ENCODE measurements at regions of chr20 and their contacts with region 1.

Region 1: DNA sequence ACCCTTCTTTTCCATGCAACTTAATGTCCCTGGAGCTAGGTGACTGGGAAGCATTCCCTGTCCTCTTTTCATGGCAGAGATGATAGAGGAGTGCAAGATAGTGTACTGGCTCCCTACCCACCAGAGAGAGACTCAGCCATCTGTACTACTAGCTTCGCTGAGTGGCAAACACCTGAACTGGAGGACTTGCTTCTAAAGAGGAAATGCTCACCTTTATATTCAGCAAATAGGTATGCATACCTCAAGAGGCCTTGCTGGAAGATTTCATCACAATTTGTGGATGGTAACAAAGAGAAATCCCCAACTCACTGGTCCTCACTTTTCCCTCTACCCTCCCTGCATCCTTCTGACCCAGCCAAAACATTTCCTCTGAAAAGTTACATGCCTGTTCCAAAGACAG is 124.1 kb downstream of the FOXA2 start:
- DNase-seq: no peak
- ATAC-seq: no peak
- H3K4me3 ChIP-seq: no peak overlapping the region
- H3K27ac ChIP-seq: no peak overlapping the region
- H3K4me1 ChIP-seq: no peaks in the 10 kb centered on the region
- H3K27me3 ChIP-seq: no peaks in the 10 kb centered on the region
- CTCF ChIP-seq: no peak
- POLR2A ChIP-seq: no peak

Region 2: DNA sequence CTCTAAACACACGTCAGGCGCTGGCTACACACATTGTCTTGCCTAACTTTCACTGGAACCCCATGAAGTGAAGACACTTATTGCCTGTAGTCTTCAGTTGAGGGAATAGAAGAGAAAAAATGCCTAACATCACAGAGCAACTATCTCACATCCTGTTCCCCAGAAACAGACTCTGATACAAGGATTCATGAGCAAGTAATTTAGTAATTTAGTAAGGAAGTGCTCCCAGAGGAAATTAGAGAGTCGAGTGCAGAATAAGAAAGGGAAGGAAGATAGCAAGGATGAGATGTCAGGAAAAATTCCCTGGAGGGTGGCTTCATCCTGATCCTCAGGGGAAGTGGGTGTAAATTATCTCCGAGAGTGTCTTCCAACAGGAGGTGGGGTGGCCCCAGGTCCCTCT is 20.1 kb after region 1 on chr20:
- in situ Hi-C with region 1: no loop called
- intact Hi-C with region 1: loop called (anchors 2 kb)
- DNase-seq: no peak
- ATAC-seq: no peak
- H3K4me3 ChIP-seq: no peak overlapping the region
- H3K27ac ChIP-seq: no peak overlapping the region
- H3K4me1 ChIP-seq: no peaks in the 10 kb centered on the region
- H3K27me3 ChIP-seq: no peaks in the 10 kb centered on the region
- CTCF ChIP-seq: no peak
- POLR2A ChIP-seq: no peak

Measured in gastrocnemius medialis (tissue), 4 donors.